Endothelial cell of umbilical vein (primary cell): ENCODE measurements at regions of chr18 and their contacts with region 1.

Region 1: DNA sequence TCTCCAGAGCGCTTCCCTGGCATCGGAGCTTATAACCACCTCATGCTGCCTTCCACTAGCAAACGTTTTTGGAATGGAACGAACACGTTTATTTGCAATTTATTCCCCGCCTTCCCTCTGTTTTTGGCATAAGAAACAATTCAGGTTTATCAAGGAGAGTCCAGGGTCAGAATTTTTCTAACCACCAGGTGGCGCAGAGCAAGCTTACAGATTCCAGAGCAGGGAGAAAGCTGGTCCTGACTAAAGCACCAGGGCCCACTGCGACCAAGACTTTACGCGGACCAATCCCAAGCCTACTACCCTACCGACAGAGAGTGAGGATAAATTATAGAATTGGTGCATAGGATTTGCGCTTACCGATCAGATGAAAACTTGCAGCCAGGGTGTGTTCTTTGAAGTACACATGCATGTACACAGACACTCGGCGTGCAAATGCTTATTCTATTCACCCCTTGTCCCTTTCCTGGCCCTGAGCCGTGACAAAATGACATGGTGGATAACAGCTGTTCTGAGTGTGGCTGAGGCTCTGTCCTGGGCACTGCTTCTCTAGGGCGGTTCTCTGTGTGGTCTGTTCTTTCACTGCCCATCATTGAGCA is 34.7 kb downstream of the NAPG start:
- DNase-seq: peak; percentile 69
- H3K4me3 ChIP-seq: no peak overlapping the region
- H3K27ac ChIP-seq: no peak overlapping the region
- H3K4me1 ChIP-seq: peaks cover 2% of the 10 kb centered on the region
- H3K27me3 ChIP-seq: no peaks in the 10 kb centered on the region
- CTCF ChIP-seq: peak; percentile 70 to 79
- POLR2A ChIP-seq: no peak

Region 2: GRCh38 chr18:10444314-10445008 is 116.1 kb before region 1 on chr18:
- CTCF ChIA-PET with region 1: no interaction called
- POLR2A ChIA-PET with region 1: no interaction called
- dilution Hi-C with region 1: no loop called
- intact Hi-C with region 1: no loop called
- DNase-seq: no peak
- H3K4me3 ChIP-seq: no peak overlapping the region
- H3K27ac ChIP-seq: no peak overlapping the region
- H3K4me1 ChIP-seq: no peaks in the 10 kb centered on the region
- H3K27me3 ChIP-seq: peaks cover 3 to 12% of the 10 kb centered on the region in 2 experiments
- CTCF ChIP-seq: no peak
- POLR2A ChIP-seq: no peak

Region 3: DNA sequence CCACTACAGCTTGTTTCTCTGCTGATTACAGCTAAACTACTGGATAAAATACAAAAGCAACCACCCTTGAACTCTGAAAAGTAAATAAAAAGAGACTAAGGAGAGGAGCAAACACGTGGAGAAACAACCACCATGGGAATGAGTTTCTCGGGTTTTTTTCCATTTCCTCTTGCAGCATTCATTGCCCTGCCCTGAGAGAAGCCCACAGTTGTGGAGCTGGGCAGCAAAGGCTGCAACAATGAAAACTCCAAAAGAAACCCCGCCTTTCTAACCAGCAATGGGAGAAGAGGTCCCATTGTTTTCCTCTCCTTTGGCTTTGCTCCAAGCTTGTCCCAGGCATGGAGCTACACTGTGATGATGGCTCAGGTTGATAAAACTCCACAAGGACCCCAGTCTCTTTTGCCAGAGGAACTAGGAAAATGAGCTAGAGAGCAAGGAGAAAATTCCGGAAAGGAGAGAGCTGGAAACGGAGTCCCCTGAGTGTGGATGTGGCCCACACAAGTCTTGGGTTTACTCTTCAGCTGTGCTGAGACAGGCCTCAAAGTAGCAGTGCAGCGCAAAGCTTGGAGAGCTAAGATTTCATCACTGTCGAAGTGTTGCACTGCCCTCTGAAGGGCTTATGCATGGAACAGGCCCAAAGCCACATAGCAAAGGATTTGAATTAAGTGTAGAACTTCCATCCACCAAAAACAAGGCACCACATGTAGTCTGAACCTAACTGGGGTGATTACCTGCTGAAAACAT is 13.8 kb before region 1 on chr18:
- CTCF ChIA-PET with region 1: interaction called, 12 read pairs
- POLR2A ChIA-PET with region 1: no interaction called
- dilution Hi-C with region 1: no loop called
- intact Hi-C with region 1: no loop called
- DNase-seq: peak; percentile 47
- H3K4me3 ChIP-seq: no peak overlapping the region
- H3K27ac ChIP-seq: no peak overlapping the region
- H3K4me1 ChIP-seq: peaks cover 6% of the 10 kb centered on the region
- H3K27me3 ChIP-seq: no peaks in the 10 kb centered on the region
- CTCF ChIP-seq: no peak
- POLR2A ChIP-seq: no peak

Region 4: DNA sequence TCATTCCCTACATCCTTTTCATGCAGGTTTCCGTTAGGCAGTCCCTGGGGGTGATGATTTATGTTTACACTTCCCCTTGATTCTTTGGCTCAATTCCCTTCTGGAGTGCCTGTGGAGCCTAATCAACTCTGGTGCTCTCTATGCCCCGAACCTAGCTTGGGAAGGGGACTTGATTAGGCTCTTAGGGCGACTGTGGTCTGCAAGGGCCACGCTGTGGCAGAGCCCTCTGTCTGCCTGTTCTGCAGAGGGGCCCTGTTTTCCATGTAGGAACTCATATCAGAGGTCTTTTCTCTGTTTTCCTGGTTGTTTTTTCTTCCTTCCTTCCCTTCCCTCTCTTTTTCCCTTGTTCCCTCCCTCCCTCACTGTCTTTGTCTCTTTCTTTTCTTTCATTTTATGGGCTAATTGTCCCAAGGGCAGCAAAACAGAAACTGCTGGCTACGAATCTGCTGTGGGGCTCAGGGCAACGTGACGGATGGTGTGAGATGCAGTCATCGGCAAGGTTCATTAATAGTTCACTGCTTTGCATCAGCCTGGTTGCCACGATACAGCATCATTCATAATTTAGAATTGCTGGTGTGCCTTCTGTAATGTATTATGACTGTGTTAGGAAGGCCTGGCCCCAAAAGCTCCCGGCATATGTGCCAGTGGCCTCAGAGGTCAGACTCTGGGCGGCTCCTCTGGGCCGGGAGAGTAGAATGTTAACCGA is 99.8 kb after region 1 on chr18:
- CTCF ChIA-PET with region 1: interaction called, 11 read pairs
- POLR2A ChIA-PET with region 1: no interaction called
- dilution Hi-C with region 1: no loop called
- intact Hi-C with region 1: no loop called
- DNase-seq: no peak
- H3K4me3 ChIP-seq: no peak overlapping the region
- H3K27ac ChIP-seq: no peak overlapping the region
- H3K4me1 ChIP-seq: no peaks in the 10 kb centered on the region
- H3K27me3 ChIP-seq: no peaks in the 10 kb centered on the region
- CTCF ChIP-seq: no peak
- POLR2A ChIP-seq: no peak

Region 5: DNA sequence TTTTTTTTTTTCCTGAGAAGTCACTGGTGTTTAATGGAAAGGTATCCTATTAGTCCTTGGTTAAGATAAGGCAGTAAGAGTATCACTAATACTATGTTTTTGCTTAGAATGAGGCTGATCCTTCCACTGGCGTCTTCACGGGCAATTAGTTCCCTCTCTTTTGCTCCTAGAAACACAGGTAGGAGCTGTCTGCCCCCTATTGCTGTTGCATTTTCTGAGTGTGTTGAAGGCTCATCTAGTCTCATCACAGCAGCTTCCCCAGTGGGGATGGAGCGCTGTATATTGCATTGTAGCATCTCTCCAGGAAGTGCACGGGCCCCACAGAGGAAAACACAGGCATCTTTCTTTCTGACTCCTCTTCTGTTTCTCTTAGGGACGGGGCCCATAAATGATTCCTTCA is 110.3 kb after region 1 on chr18:
- CTCF ChIA-PET with region 1: interaction called, 10 read pairs
- POLR2A ChIA-PET with region 1: no interaction called
- dilution Hi-C with region 1: no loop called
- intact Hi-C with region 1: no loop called
- DNase-seq: no peak
- H3K4me3 ChIP-seq: no peak overlapping the region
- H3K27ac ChIP-seq: no peak overlapping the region
- H3K4me1 ChIP-seq: no peaks in the 10 kb centered on the region
- H3K27me3 ChIP-seq: no peaks in the 10 kb centered on the region
- CTCF ChIP-seq: no peak
- POLR2A ChIP-seq: no peak

Region 6: DNA sequence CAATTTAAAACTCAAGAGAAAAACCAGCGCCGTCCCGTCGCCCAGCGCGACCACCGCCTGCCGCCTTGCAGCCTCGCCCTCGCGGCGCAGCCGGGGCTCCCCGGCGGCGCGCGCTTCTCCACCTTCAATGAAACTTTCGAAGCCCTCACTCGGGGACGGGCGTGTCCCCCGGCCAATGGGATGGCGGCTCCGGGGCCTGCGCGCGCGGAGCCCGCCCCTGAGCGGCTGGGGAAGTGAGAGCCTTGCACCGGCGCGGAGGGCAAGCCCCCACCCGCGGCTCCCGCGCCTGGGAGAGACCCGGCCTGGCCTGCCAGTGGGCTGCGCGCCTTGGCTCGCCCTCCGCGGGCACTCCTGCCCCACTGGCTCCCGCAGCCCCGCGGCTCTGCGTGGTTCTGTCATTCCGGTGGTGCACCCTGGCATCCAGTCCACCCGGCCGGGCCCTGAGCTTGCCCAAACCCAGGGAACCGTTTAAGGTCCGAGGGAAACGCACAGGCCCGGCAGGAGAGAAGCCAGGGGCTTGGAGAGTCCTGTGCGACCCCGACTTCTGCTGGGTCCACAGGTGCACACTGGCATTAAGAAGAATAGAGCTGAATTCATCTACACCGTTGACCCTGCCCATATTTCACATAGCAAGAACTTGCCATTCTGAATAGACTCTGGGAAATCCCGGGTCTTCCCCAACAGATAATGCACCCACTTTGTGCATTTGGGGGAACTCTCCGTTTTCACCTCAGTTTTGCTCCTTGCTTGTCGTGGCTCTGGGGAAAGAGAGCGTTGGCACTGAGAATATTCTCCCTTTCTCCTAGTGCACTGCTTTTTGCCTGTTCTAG is 589.1 kb after region 1 on chr18 and contains the start of gene PIEZO2:
- CTCF ChIA-PET with region 1: interaction called, 234 read pairs
- POLR2A ChIA-PET with region 1: no interaction called
- dilution Hi-C with region 1: no loop called
- intact Hi-C with region 1: loop called (anchors 1 kb)
- DNase-seq: peak; percentile 29
- H3K4me3 ChIP-seq: peak within 1 kb of the TSS in 2 of 3 experiments; percentile 21 to 25
- H3K27ac ChIP-seq: no peak within 1 kb of the TSS
- H3K4me1 ChIP-seq: no peaks in the 10 kb centered on the region
- H3K27me3 ChIP-seq: peaks cover 44 to 47% of the 10 kb centered on the region in 2 experiments
- CTCF ChIP-seq: no peak
- POLR2A ChIP-seq: no peak
- total RNA-seq, gene PIEZO2: 5.0 and 11.2 TPM in 2 replicates